OCI-LY7 (cell line): ENCODE measurements at regions of chr6 and their contacts with region 1.

Region 1: DNA sequence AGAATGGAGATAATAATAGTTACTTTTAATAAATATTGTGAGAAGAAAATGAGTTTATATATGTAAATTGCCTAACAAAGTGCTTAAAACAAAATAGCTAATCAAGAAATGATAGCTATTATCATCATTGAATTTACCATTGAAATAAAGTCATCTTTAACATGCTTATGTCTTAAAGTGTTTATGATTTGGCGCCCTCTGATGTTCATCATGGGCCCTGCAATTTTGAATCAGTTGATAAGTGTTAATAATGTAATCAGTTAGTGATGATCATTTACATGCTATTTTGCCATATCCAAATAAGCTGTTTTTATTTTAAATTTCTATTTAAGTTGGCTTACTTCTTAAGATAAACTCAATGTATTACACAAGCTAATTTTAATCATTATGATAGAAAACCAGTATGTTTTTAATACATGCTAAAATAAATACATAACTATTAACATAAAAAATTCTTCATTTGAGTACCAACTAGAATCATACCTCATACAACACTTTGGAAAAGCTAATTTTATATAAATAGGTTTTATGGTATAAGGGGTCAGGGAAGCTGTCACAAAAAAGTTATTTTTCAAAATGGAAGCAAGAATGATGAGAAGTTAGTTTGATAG is 39.2 kb upstream of the TPD52L1 start:
- DNase-seq: peak; percentile 41
- H3K4me3 ChIP-seq: no peak overlapping the region
- H3K27ac ChIP-seq: no peak overlapping the region
- H3K4me1 ChIP-seq: no peaks in the 10 kb centered on the region
- CTCF ChIP-seq: peak; percentile 93

Region 2: DNA sequence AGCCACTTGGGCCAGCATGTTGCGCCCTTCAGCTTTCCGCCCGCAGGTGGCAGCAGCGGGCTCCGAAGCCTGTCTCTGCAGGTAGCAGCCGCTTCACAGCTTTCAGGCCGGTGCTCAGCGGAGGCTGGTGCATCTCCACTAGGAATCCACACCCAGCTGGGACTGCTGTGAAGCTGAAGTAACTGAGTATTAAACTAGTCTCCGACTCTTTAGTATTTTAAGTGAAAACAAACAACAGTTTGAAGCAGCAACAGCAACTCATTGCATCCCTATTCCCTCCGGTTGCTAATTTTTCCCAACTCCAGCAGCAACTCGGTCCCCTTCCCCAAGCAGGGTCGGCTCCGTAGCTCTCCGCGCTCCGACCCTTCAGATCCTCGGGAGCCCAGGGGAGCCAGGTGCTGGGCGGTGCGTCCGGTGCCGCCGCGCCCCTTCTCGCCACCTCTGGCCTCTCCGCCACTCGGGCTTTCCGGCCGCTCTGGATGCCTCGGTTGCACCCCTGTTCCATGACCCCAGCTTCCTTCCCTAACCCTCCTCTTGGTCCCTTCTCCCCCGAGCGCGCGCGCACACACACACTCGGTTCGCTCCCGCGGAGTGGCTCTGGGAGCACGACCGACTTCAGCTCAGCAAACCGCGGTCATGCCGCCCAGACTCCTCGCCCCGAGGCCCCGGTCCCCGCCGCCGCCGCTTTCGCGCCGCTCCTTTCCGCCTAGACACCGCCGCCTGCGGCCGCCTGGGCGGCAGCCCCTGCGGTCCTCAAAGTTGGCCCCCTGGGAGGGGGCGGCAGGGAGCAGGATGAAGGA is 1311.5 kb before region 1 on chr6:
- CTCF ChIA-PET with region 1: no interaction called
- POLR2A ChIA-PET with region 1: no interaction called
- intact Hi-C with region 1: loop called (anchors 10 kb)
- DNase-seq: peak; percentile 54
- H3K4me3 ChIP-seq: no peak overlapping the region
- H3K27ac ChIP-seq: no peak overlapping the region
- H3K4me1 ChIP-seq: no peaks in the 10 kb centered on the region
- CTCF ChIP-seq: peak; percentile 89

Region 3: DNA sequence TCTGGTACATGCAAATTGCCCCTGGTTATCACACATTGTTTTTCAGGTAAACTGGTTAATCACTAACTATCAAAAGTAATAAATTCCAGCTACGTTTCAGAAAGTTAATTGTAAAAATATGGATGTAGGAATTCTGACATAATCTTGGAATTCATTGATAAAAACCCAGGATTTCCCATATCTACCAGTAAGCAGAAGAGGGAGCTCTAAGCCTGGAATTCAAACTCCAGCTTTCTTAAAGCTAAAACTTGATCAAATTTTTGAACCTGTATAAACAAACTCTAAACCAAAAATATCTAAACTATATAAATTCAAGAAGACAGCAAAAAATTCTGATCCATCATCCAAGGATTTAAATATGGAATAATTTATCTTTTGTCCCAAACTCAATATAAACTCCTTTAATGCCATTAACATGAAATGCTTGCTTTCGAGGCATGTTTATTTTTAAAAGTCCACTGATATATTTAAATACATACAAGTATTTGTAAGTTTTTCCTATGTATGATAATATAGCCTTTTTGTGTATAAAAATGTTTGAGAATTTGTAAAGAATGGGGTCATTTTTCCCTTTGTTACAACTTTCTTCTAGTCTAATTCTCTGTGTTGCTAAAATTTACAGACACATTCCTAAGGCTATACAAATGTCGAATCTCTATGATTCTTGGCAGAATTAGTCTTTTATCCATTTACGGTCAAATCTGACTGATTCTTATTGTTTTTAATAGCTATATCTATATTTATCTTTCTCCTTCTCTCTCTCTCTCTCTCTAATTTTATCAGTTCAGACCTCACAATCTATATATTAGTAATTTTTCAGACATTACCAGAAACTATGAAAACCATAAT is 243.5 kb before region 1 on chr6:
- CTCF ChIA-PET with region 1: no interaction called
- POLR2A ChIA-PET with region 1: no interaction called
- intact Hi-C with region 1: loop called (anchors 5 kb)
- DNase-seq: no peak
- H3K4me3 ChIP-seq: no peak overlapping the region
- H3K27ac ChIP-seq: no peak overlapping the region
- H3K4me1 ChIP-seq: no peaks in the 10 kb centered on the region
- CTCF ChIP-seq: peak; percentile 61

Region 4: GRCh38 chr6:124903791-124904190 is 210.6 kb before region 1 on chr6:
- CTCF ChIA-PET with region 1: no interaction called
- POLR2A ChIA-PET with region 1: no interaction called
- intact Hi-C with region 1: no loop called
- DNase-seq: no peak
- H3K4me3 ChIP-seq: no peak overlapping the region
- H3K27ac ChIP-seq: no peak overlapping the region
- H3K4me1 ChIP-seq: no peaks in the 10 kb centered on the region
- CTCF ChIP-seq: no peak